ENCODE measurements at regions of chr21 and their contacts with region 1.

Region 1: DNA sequence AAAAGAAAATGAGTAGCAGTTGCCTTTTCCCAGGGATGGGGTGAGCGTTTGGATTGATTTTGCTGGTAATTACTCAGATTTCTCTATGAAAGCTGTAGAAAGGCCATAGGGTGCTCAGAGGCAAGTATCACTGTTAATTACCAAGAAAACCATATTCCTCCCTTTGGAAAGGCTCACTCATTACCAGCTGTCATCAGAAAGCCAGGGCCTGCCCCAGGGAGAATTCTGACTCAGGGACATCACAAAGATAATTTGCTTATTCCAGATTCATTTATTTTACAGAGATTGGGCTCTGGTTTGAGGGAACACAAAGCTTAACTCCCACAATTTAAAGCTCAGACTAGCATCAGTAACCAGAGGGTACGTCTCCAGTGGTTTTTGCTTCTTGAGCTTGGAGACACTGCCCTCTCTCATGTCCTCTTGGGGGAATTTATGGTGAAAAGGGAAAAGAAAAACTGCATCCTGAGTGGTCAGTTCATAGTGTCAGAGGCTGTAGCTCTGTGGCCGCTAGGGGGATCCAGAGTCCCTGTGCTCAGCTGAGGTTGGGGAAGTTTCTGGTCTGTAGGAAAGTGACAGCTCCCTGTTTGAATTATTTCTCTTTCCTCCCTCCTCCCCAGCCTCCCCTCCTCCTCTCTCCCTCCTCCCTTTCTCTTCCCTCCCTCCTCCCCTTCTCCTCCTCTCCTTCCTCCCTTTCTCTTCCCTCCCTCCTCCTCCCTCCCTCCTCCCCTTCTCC is 204.3 kb downstream of the KCNJ6 start:
- DNase-seq: peak; percentile 74
- H3K4me3 Mint-ChIP-seq: no peak overlapping the region
- H3K27ac Mint-ChIP-seq: no peak overlapping the region
- H3K4me1 Mint-ChIP-seq: no peaks in the 10 kb centered on the region
- H3K27me3 Mint-ChIP-seq: no peaks in the 10 kb centered on the region
- CTCF ChIP-seq: peak; percentile 84

Region 2: DNA sequence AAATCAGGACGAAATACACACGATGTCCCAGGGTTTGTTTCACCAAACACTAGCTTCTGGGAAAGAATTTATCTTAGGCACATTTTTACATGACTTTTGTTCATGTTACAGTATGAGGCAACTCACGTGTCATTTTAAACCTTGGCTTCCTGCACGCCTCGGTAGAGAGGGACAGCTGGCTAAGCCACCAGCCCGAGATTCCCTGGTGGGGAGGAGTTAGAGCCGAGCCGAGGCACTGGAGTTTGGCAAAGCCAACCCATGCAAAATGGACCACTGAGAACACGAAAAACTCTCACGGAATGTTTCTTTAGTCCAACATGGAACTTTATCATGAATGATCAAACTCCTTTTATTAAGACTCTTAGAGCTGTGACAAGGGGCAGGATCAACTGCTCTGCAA is 105.5 kb before region 1 on chr21:
- CTCF ChIA-PET with region 1: no interaction called
- POLR2A ChIA-PET with region 1: no interaction called
- intact Hi-C with region 1: no loop called
- DNase-seq: no peak
- H3K4me3 Mint-ChIP-seq: no peak overlapping the region
- H3K27ac Mint-ChIP-seq: no peak overlapping the region
- H3K4me1 Mint-ChIP-seq: peaks cover 6% of the 10 kb centered on the region
- H3K27me3 Mint-ChIP-seq: peaks cover 55% of the 10 kb centered on the region
- CTCF ChIP-seq: no peak

Region 3: DNA sequence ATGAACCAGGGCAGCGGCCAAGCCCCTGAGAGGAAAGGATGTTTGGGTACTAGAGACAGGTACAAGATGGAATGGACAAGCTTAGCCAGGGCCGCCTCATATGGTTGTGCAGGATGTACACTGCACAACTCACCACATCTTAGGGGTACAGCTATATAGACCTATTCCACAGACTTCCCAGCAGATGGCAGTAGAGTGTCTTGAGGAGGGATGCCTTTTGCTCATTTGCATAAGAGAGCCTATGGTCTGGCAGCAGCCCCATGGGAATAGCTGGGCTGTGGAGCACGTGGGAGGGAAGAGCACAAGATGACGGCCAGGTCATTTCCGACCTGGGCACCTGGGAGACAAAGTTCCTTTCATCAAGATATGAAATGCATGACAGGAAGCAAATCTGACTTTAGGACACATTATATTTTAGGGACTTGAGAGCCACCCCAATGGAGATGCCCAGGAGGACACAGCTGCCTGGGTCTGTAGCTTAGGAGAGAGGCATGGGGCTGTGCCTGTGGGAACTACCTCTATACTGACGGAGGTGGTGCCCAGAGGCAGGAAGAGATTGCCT is 11.3 kb before region 1 on chr21:
- CTCF ChIA-PET with region 1: interaction called, 32 read pairs
- POLR2A ChIA-PET with region 1: no interaction called
- intact Hi-C with region 1: no loop called
- DNase-seq: peak; percentile 88
- H3K4me3 Mint-ChIP-seq: no peak overlapping the region
- H3K27ac Mint-ChIP-seq: no peak overlapping the region
- H3K4me1 Mint-ChIP-seq: no peaks in the 10 kb centered on the region
- H3K27me3 Mint-ChIP-seq: peaks cover 24% of the 10 kb centered on the region
- CTCF ChIP-seq: peak; percentile 57

Region 4: DNA sequence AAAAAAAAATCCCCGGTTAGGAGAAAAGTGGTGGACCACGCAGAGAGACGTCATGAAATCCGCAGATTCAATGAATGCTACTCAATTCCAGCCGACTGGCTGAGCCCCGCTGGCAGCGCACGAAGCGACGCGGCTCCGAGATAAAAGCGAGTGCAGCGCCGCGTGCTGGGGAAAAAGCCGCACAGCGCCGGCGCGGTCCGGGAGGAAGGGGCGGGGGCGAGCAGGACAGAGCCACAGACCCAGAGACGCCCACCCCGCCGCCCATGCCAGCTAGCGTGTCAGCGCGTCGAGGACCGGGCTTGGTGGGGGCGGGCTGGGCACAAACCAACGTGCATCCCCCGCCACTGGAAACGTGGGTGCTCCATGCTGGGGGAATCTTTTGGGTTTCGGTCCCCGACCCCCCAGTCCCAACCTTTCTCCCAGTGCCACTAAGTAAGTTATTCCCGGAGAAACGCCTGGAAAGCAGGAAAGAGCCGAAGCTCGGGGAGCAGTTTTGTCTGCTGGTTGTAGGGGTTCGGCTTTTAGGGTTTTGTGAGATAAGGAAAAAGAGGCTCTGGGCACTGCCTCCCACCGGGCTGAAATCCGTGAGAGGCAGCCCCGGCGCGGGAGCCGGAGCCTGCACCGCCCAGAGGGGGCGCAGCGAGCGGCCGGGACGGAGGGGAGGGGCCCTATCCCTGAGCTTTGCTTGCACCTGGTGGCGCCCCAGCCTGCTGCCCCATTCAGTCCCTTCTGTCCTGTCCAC is 204.5 kb after region 1 on chr21 and contains the start of gene KCNJ6:
- CTCF ChIA-PET with region 1: no interaction called
- POLR2A ChIA-PET with region 1: no interaction called
- intact Hi-C with region 1: loop called (anchors 1 kb)
- DNase-seq: peak; percentile 48
- H3K4me3 Mint-ChIP-seq: peak within 1 kb of the TSS; percentile 70
- H3K27ac Mint-ChIP-seq: no peak within 1 kb of the TSS
- H3K4me1 Mint-ChIP-seq: peaks cover 11% of the 10 kb centered on the region
- H3K27me3 Mint-ChIP-seq: peaks cover 31% of the 10 kb centered on the region
- CTCF ChIP-seq: peak; percentile 84
- total RNA-seq, gene KCNJ6: 0.20 and 0.28 TPM in 2 replicates

Region 5: GRCh38 chr21:38120984-38121855 is 409.2 kb after region 1 on chr21:
- CTCF ChIA-PET with region 1: interaction called, 49 read pairs
- POLR2A ChIA-PET with region 1: interaction called, 3 read pairs
- intact Hi-C with region 1: loop called (anchors 1 kb)
- DNase-seq: no peak
- H3K4me3 Mint-ChIP-seq: no peak overlapping the region
- H3K27ac Mint-ChIP-seq: no peak overlapping the region
- H3K4me1 Mint-ChIP-seq: peaks cover 4% of the 10 kb centered on the region
- H3K27me3 Mint-ChIP-seq: no peaks in the 10 kb centered on the region
- CTCF ChIP-seq: no peak

Region 6: GRCh38 chr21:38126669-38127303 is 414.8 kb after region 1 on chr21:
- CTCF ChIA-PET with region 1: interaction called, 49 read pairs
- POLR2A ChIA-PET with region 1: interaction called, 4 read pairs
- intact Hi-C with region 1: loop called (anchors 1 kb)
- DNase-seq: peak; percentile 78
- H3K4me3 Mint-ChIP-seq: no peak overlapping the region
- H3K27ac Mint-ChIP-seq: no peak overlapping the region
- H3K4me1 Mint-ChIP-seq: peaks cover 3% of the 10 kb centered on the region
- H3K27me3 Mint-ChIP-seq: no peaks in the 10 kb centered on the region
- CTCF ChIP-seq: peak; percentile 68

Region 7: GRCh38 chr21:38196036-38196435 is 484.0 kb after region 1 on chr21:
- CTCF ChIA-PET with region 1: interaction called, 12 read pairs
- POLR2A ChIA-PET with region 1: no interaction called
- intact Hi-C with region 1: no loop called
- DNase-seq: no peak
- H3K4me3 Mint-ChIP-seq: no peak overlapping the region
- H3K27ac Mint-ChIP-seq: no peak overlapping the region
- H3K4me1 Mint-ChIP-seq: no peaks in the 10 kb centered on the region
- H3K27me3 Mint-ChIP-seq: no peaks in the 10 kb centered on the region
- CTCF ChIP-seq: no peak

Region 8: GRCh38 chr21:38219049-38219628 is 507.1 kb after region 1 on chr21:
- CTCF ChIA-PET with region 1: interaction called, 24 read pairs
- POLR2A ChIA-PET with region 1: no interaction called
- intact Hi-C with region 1: loop called (anchors 1 kb)
- DNase-seq: peak; percentile 78
- H3K4me3 Mint-ChIP-seq: no peak overlapping the region
- H3K27ac Mint-ChIP-seq: no peak overlapping the region
- H3K4me1 Mint-ChIP-seq: peaks cover 7% of the 10 kb centered on the region
- H3K27me3 Mint-ChIP-seq: no peaks in the 10 kb centered on the region
- CTCF ChIP-seq: peak; percentile 94

Measured in MCF 10A (cell line).